ENCODE measurements at regions of chr5 and their contacts with region 1.

Region 1: DNA sequence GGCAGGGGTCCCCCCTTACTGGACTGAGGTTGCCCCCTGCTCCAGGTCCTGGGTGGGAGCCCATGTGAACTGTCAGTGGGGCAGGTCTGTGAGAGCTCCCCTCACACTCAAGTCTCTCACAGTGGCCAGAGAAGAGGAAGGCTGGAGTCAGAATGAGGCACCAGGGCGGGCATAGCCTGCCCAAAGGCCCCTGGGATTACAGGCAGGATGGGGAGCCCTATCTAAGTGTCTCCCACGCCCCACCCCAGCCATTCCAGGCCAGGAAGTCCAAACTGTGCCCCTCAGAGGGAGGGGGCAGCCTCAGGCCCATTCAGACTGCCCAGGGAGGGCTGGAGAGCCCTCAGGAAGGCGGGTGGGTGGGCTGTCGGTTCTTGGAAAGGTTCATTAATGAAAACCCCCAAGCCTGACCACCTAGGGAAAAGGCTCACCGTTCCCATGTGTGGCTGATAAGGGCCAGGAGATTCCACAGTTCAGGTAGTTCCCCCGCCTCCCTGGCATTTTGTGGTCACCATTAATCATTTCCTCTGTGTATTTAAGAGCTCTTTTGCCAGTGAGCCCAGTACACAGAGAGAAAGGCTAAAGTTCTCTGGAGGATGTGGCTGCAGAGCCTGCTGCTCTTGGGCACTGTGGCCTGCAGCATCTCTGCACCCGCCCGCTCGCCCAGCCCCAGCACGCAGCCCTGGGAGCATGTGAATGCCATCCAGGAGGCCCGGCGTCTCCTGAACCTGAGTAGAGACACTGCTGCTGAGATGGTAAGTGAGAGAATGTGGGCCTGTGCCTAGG is at the start of gene CSF2:
- DNase-seq: peak; percentile 50 to 78
- H3K4me3 ChIP-seq: no peak within 1 kb of the TSS
- H3K27ac ChIP-seq: peak within 1 kb of the TSS; percentile 83
- H3K4me1 ChIP-seq: peaks cover 40% of the 10 kb centered on the region
- H3K27me3 ChIP-seq: no peaks in the 10 kb centered on the region
- CTCF ChIP-seq: no peak
- total RNA-seq, gene CSF2: not detected in 2 replicates

Region 2: GRCh38 chr5:132103332-132103951 is 30.0 kb after region 1 on chr5:
- CTCF ChIA-PET with region 1: no interaction called
- POLR2A ChIA-PET with region 1: no interaction called
- intact Hi-C with region 1: loop called (anchors 2 kb)
- DNase-seq: peak; percentile 86 to 93
- H3K4me3 ChIP-seq: no peak overlapping the region
- H3K27ac ChIP-seq: peak overlapping the region; percentile 88
- H3K4me1 ChIP-seq: peaks cover 60% of the 10 kb centered on the region
- H3K27me3 ChIP-seq: no peaks in the 10 kb centered on the region
- CTCF ChIP-seq: 0 out of 2 replicates have a peak, but pooled peaks have one; percentile 22

Region 3: DNA sequence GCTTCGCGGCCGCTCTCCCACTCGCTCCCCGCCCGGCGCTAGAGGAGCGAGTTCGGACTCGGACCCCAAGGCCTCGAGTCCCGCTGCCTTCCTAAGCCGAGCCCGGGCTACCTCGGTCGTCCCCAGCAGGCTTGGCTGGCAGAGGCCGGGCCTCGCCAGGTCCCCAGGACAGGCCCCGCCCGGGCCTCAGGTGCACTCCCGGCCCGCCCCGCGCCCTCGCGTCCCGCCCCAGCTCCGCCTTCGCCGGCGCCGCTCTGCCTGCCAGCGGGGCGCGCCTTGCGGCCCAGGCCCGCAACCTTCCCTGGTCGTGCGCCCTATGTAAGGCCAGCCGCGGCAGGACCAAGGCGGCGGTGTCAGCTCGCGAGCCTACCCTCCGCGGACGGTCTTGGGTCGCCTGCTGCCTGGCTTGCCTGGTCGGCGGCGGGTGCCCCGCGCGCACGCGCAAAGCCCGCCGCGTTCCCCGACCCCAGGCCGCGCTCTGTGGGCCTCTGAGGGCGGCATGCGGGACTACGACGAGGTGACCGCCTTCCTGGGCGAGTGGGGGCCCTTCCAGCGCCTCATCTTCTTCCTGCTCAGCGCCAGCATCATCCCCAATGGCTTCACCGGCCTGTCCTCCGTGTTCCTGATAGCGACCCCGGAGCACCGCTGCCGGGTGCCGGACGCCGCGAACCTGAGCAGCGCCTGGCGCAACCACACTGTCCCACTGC is 296.2 kb after region 1 on chr5 and contains the start of gene SLC22A5:
- CTCF ChIA-PET with region 1: no interaction called
- POLR2A ChIA-PET with region 1: no interaction called
- intact Hi-C with region 1: loop called (anchors 1 kb)
- DNase-seq: peak; percentile 63 to 83
- H3K4me3 ChIP-seq: peak within 1 kb of the TSS; percentile 75
- H3K27ac ChIP-seq: peak within 1 kb of the TSS; percentile 45
- H3K4me1 ChIP-seq: peaks cover 67% of the 10 kb centered on the region
- H3K27me3 ChIP-seq: no peaks in the 10 kb centered on the region
- CTCF ChIP-seq: no peak
- total RNA-seq, gene SLC22A5: 13.5 and 15.2 TPM in 2 replicates

Region 4: GRCh38 chr5:133978943-133979342 is 1905.5 kb after region 1 on chr5:
- CTCF ChIA-PET with region 1: interaction called, 14 read pairs
- POLR2A ChIA-PET with region 1: no interaction called
- intact Hi-C with region 1: no loop called
- DNase-seq: no peak
- H3K4me3 ChIP-seq: no peak overlapping the region
- H3K27ac ChIP-seq: no peak overlapping the region
- H3K4me1 ChIP-seq: no peaks in the 10 kb centered on the region
- H3K27me3 ChIP-seq: no peaks in the 10 kb centered on the region
- CTCF ChIP-seq: no peak